CD14-positive monocyte (primary cell): ENCODE measurements at regions of chr16 and their contacts with region 1.

Region 1: DNA sequence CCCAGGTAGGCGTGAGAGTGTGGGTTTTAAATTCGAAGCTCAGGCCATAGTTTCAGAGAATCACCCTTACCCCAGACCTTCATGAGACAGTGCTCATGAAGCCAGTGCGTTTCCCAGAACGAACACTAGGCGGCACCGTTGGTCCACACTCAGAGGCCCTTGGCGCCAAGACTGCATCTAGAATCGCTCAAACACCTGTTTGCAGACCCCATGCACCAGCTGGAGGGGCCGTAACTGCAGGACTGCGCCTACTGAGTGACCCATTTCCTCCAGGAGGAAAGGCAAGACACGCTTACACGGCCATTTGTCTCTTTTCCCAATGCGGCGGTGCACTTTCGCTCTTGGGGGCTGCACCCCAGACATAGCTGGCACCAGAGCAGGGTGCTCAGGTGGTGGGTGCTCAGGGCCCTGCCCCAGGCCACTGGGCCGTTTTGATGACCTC is 34.0 kb downstream of the ADGRG5 start:
- DNase-seq: peak; percentile 61 to 67 (median 65)
- H3K4me3 ChIP-seq: no peak overlapping the region
- H3K4me3 Mint-ChIP-seq: peak overlapping the region in 1 of 2 donors; percentile 21
- H3K27ac ChIP-seq: no peak overlapping the region
- H3K27ac Mint-ChIP-seq: peak overlapping the region in 1 of 7 donors; percentile 63
- H3K4me1 ChIP-seq: peaks cover 2 to 3% of the 10 kb centered on the region in 2 donors
- H3K4me1 Mint-ChIP-seq: peaks cover 7% of the 10 kb centered on the region
- H3K27me3 ChIP-seq: peaks cover 0 to 17% of the 10 kb centered on the region in 2 donors
- H3K27me3 Mint-ChIP-seq: peaks cover 23 to 44% (median 27%) of the 10 kb centered on the region in 3 donors
- CTCF ChIP-seq: peak; percentile 95

Region 2: GRCh38 chr16:57648590-57649442 is 72.4 kb after region 1 on chr16:
- intact Hi-C with region 1: loop called (anchors 1 to 2 kb)
- DNase-seq: peak; percentile 82 to 86 (median 83)
- H3K4me3 ChIP-seq: no peak overlapping the region
- H3K4me3 Mint-ChIP-seq: no peak overlapping the region
- H3K27ac ChIP-seq: peak overlapping the region; percentile 48 to 58
- H3K27ac Mint-ChIP-seq: peak overlapping the region; percentile 26 to 93 (median 83)
- H3K4me1 ChIP-seq: peaks cover 24 to 25% of the 10 kb centered on the region in 2 donors
- H3K4me1 Mint-ChIP-seq: peaks cover 25% of the 10 kb centered on the region
- H3K27me3 ChIP-seq: peaks cover 2 to 34% of the 10 kb centered on the region in 2 donors
- H3K27me3 Mint-ChIP-seq: peaks cover 23 to 39% (median 32%) of the 10 kb centered on the region in 3 donors
- CTCF ChIP-seq: peak; percentile 100